MCF 10A (cell line): ENCODE measurements at regions of chr12 and their contacts with region 1.

Region 1: GRCh38 chr12:54324617-54325441 is at the start of gene COPZ1:
- DNase-seq: peak; percentile 100
- H3K4me3 Mint-ChIP-seq: peak within 1 kb of the TSS; percentile 100
- H3K27ac Mint-ChIP-seq: peak within 1 kb of the TSS; percentile 100
- H3K4me1 Mint-ChIP-seq: peaks cover 19% of the 10 kb centered on the region
- H3K27me3 Mint-ChIP-seq: no peaks in the 10 kb centered on the region
- CTCF ChIP-seq: peak; percentile 77
- total RNA-seq, gene COPZ1: 207 and 299 TPM in 2 replicates

Region 2: DNA sequence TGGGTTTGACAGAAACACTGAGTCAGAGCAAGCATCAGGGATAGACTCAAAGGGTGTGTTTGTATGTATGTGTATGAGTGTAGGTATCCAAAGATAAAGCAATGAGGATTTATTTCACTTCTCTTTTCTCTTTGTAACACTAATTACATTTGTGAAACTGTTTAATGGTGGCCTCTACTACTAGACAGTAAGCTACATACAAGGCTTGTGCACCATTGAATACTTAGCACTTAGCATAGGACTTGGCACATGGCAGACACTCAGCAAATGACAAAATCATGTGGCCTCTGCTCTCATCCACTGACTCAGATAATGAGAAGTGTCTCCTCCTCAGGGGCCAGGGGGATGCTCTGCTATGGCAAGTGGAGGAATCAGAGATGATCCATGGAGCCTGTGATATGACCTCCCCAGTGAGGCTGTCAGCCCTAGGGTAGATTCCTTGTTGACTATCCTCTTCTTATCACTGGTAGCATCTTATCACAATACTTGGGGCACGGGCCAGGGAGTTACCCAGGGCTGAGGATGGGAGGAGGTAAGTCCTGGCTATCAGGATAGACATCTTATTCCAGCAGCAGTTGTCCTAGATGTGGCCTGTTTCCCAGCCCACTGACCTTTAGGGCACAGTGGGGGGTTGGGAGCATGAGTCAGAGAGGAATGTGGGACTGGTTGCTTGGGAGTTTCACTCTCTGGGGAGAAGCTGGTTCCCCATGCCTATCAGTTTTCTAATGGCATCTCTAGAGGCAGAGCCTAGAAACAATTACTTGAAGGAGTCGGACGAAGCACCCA is 457.4 kb before region 1 on chr12:
- CTCF ChIA-PET with region 1: no interaction called
- POLR2A ChIA-PET with region 1: no interaction called
- intact Hi-C with region 1: no loop called
- DNase-seq: peak; percentile 84
- H3K4me3 Mint-ChIP-seq: no peak overlapping the region
- H3K27ac Mint-ChIP-seq: peak overlapping the region; percentile 25
- H3K4me1 Mint-ChIP-seq: peaks cover 32% of the 10 kb centered on the region
- H3K27me3 Mint-ChIP-seq: no peaks in the 10 kb centered on the region
- CTCF ChIP-seq: no peak

Region 3: DNA sequence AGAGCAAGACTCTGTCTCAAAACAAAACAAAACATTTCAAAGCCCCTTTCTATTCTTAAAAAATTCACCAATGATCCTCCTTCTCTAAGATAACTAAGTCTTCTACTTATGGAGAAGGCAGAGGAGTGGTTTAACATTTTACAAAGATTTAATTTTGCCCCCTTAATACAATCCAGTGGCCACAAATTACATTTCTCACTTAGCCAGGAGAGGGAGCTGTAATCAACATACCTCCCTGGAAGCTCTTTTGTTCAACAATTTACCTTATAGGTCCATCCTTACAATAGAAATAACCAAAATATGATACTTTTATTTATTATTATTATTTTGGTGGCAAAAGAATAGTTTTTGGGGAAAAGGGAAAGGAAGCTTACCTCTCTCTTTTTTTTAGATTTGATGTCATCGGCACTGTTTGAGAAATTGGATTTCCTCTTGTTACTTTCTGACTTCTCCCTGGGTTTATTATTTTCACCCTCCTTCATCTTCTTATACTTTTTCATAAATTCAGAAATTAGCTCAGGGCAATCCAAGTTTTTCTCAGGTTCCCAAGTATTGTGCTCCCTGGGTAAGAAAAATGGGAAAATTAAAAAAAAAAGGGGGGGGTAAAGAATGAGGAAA is 73.1 kb before region 1 on chr12:
- CTCF ChIA-PET with region 1: interaction called, 19 read pairs
- POLR2A ChIA-PET with region 1: no interaction called
- intact Hi-C with region 1: loop called (anchors 1 kb)
- DNase-seq: peak; percentile 58
- H3K4me3 Mint-ChIP-seq: no peak overlapping the region
- H3K27ac Mint-ChIP-seq: peak overlapping the region; percentile 69
- H3K4me1 Mint-ChIP-seq: no peaks in the 10 kb centered on the region
- H3K27me3 Mint-ChIP-seq: no peaks in the 10 kb centered on the region
- CTCF ChIP-seq: peak; percentile 68

Region 4: DNA sequence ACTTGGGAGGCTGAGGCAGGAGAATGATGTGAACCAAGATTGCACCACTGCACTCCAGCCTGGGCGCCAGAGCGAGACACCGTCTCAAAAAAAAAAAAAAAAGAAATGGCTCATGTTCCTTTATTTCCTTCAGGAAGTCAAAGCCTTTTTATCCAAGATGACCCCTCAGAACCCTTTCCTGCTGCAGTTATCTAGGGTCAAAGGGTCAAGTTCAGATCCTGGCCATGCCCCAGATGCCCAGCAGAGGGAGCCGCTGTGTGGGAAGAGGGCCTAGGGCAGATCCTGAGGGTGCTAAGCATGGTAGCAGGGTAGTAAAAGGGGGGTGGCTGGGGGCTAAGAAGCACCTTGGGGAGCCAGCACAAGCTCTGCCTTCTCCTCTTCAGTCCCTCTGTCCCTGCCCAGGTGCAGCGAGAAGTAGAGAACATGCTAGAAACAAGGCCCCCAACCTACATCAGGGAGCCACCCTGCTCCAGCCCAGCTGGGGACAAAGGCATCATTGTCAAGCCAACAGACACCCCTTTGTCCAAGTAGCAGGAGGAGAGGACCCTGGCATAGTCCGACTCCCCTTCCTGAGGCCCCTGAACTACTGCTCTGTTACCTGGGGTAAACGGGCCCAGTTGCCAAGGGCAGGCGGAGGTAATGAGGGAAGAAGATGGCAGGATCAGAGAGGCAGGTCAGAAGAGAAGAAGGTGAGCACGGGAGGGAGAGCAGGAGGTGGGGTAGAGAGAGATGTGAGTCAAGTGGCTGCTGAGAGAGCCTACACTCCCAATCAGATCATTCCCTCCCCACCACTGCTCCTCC is 30.5 kb before region 1 on chr12:
- CTCF ChIA-PET with region 1: interaction called, 57 read pairs
- POLR2A ChIA-PET with region 1: interaction called, 10 read pairs
- intact Hi-C with region 1: loop called (anchors 1 kb)
- DNase-seq: peak; percentile 63
- H3K4me3 Mint-ChIP-seq: no peak overlapping the region
- H3K27ac Mint-ChIP-seq: no peak overlapping the region
- H3K4me1 Mint-ChIP-seq: peaks cover 7% of the 10 kb centered on the region
- H3K27me3 Mint-ChIP-seq: no peaks in the 10 kb centered on the region
- CTCF ChIP-seq: peak; percentile 81

Region 5: DNA sequence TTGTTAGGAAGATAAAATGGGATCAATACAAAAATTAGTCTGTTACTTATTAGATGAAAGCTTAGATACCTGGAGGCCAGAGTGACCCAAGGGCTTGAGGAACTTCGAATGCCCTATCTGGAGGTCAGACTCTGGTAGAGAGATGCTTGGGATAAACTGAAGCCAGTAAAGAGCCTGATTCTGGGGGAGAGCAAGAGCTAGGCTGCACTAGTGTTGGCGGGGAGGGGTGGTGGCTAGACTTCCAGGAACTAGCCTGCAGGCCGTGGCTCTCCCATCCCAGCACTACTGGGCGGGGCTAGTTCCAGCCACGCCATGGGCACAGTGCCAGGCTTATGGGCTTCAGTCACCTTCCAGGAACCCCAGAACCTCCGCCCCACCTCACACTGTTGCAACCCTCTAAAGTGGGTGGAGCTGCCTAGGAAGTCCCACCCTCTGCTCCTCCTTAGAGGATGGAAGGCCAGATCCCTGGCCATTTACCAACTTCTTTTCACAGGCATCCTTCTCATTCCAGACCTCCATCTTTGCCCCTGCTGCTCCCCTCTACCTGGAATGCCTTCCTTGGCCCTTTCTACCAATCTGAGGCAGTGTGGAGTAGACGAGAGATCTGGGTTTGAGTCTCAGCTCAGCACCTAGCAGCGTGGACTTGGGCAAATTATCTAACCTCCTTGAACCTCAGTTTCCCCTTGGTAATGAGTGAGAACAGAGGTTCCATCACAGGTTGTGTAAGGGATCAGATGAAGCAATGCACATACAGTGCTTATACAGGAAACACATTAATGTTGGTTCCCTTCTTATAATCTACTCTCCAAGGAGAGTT is 17.7 kb before region 1 on chr12:
- CTCF ChIA-PET with region 1: interaction called, 29 read pairs
- POLR2A ChIA-PET with region 1: interaction called, 18 read pairs
- intact Hi-C with region 1: no loop called
- DNase-seq: peak; percentile 99
- H3K4me3 Mint-ChIP-seq: no peak overlapping the region
- H3K27ac Mint-ChIP-seq: no peak overlapping the region
- H3K4me1 Mint-ChIP-seq: peaks cover 34% of the 10 kb centered on the region
- H3K27me3 Mint-ChIP-seq: no peaks in the 10 kb centered on the region
- CTCF ChIP-seq: no peak

Region 6: GRCh38 chr12:54359033-54359761 is 34.4 kb after region 1 on chr12:
- CTCF ChIA-PET with region 1: interaction called, 9 read pairs
- POLR2A ChIA-PET with region 1: interaction called, 20 read pairs
- intact Hi-C with region 1: loop called (anchors 1 kb)
- DNase-seq: peak; percentile 99
- H3K4me3 Mint-ChIP-seq: no peak overlapping the region
- H3K27ac Mint-ChIP-seq: no peak overlapping the region
- H3K4me1 Mint-ChIP-seq: peaks cover 23% of the 10 kb centered on the region
- H3K27me3 Mint-ChIP-seq: no peaks in the 10 kb centered on the region
- CTCF ChIP-seq: no peak